ENCODE measurements at regions of chr9 and their contacts with region 1.

Region 1: DNA sequence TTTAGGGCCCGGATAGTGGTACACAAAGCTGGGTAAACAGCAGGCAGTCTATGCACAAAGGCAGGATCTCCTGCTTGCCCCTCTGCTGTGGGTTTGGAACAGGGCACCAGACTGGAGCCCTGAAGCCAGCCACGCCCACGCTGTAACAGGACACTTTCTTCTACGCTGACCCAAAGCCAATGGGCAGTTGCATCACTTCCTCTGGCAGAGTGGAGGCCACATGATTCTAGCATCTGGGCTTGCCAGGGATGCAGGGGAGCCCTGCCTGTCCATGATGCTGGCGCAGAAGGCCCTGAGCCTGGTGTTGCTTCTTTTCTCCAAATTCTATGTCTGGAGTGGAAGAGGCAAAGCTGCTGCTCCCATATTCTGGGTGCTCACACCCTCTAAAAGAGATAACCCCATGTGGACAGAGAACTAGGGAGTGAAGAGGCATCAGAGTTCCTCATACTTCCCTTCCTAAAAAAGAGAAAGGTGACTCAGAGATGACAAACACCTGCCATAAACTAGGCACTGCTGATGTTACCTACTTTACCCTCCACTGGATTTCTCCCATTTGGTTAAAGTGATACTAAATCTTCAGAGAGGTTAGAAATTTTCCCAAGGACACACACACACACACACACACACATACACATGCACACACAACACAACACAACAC is 260.3 kb upstream of the KLF4 start:
- DNase-seq: peak; percentile 85
- H3K4me3 ChIP-seq: no peak overlapping the region
- H3K27ac ChIP-seq: peak overlapping the region; percentile 43 to 68
- H3K4me1 ChIP-seq: no peaks in the 10 kb centered on the region
- H3K27me3 ChIP-seq: no peaks in the 10 kb centered on the region
- CTCF ChIP-seq: no peak
- POLR2A ChIP-seq: no peak

Region 2: GRCh38 chr9:108053555-108054061 is 303.7 kb after region 1 on chr9:
- intact Hi-C with region 1: loop called (anchors 5 kb)
- DNase-seq: peak; percentile 88
- H3K4me3 ChIP-seq: no peak overlapping the region
- H3K27ac ChIP-seq: peak overlapping the region; percentile 2 to 10
- H3K4me1 ChIP-seq: peaks cover 3% of the 10 kb centered on the region
- H3K27me3 ChIP-seq: no peaks in the 10 kb centered on the region
- CTCF ChIP-seq: no peak
- POLR2A ChIP-seq: no peak

Region 3: GRCh38 chr9:108142504-108143201 is 392.7 kb after region 1 on chr9:
- intact Hi-C with region 1: loop called (anchors 10 kb)
- DNase-seq: peak; percentile 95
- H3K4me3 ChIP-seq: no peak overlapping the region
- H3K27ac ChIP-seq: peak overlapping the region; percentile 54 to 63
- H3K4me1 ChIP-seq: peaks cover 10% of the 10 kb centered on the region
- H3K27me3 ChIP-seq: no peaks in the 10 kb centered on the region
- CTCF ChIP-seq: peak in 2 of 4 experiments; percentile 15 to 28
- POLR2A ChIP-seq: no peak

Region 4: GRCh38 chr9:108272349-108272899 is 522.5 kb after region 1 on chr9:
- intact Hi-C with region 1: loop called (anchors 10 kb)
- DNase-seq: peak; percentile 49
- H3K4me3 ChIP-seq: peak overlapping the region; percentile 4 to 20
- H3K27ac ChIP-seq: peak overlapping the region; percentile 82 to 85
- H3K4me1 ChIP-seq: no peaks in the 10 kb centered on the region
- H3K27me3 ChIP-seq: no peaks in the 10 kb centered on the region
- CTCF ChIP-seq: peak; percentile 63 to 72 (median 65)
- POLR2A ChIP-seq: no peak